Sciatic nerve (tissue), 2 donors: ENCODE measurements at regions of chr17 and their contacts with region 1.

Region 1: DNA sequence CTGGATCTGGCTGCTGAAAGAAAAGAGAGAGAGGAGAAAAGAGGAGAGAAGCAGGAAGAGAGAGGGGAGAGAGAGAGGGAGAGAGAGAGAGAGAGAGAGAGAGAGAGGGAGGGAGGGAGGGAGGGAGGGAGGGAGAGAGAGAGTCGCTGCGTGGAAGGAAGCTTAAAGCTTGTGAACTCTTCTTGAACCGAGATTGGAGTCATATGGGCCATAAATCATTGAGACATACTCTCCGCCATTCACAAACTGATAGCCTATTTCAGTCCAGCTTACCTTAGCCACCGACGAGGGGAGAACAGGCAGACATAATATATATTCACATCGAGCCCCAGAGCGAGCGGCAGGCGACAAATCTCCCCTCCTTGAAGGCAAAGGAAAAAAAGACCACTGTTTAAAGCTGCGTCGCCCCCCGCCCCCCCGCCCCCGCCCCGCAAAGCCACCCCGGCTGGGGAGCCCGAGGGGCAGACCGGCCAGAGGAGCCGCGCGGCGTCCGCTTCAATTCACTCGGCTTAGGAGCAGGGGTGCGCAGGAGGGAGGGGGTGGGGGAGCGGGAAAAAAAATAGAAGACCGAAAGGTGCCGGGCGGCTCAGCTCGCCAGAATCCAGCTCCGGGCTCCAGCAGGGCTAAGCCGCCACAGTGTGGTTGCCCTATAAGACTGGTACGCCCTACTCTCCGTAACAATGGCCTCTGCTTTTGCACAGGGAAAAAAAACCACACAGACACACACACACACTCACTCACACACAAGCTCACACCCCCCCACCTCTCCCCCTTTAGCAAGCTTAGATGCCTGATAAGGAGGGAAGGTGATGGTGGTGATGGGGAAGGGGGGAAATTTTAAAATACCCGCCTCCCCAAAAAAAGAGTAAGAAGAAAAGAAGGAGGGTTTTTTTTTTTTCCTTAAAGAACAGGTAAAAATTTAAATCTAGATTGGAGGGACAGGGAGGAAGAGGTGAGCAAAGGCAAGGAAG is 10.6 kb upstream of the HOXB2 start:
- DNase-seq: no peak
- ATAC-seq: peak; percentile 56

Region 2: GRCh38 chr17:48577946-48578615 is 22.5 kb after region 1 on chr17 and contains the start of gene HOXB4:
- intact Hi-C with region 1: loop called (anchors 2 kb)
- DNase-seq: peak; percentile 90
- ATAC-seq: peak; percentile 75
- total RNA-seq, gene HOXB4: 8.8 TPM

Region 3: DNA sequence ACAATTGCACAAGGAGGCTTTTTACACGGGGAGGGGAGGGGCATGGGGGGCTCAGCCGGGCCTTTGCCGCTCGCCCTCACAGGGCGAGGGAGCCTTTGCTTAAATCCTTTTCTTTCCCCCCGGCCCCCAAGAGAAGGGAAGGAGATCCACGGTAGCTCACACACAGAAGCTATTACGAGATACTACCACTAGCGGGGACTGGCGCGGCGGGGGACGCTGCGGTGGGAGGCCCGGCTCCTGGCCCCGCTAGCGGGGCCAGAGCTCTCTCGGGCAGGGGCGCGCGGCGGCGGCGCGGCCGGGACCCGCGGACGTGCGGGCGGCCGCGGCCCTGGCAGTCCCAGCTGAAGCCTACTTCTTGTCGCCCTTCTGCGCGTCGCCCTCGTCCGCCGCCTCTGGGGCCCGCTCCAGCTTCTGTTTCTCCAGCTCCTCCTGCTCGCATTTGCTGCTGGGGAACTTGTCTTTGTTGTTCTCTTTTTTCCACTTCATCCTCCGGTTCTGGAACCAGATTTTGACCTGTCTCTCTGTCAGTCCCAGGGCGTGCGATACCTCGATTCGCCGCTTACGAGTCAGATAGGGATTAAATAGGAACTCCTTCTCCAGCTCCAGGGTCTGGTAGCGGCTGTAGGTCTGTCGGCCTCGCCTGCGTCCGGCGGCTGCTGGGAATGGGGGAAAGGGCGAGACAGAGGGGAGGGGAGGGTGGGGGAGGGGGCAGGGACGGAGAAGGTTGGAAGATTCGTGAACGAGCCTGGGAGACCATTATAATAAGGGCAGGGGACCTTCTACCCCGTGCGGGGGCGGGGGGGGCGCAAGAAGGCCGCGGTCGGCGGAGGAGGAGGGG is 57.5 kb after region 1 on chr17:
- intact Hi-C with region 1: loop called (anchors 2 kb)
- DNase-seq: no peak
- ATAC-seq: no peak